Right lobe of liver (tissue), 6 donors: ENCODE measurements at regions of chr6 and their contacts with region 1.

Region 1: GRCh38 chr6:53171605-53172446 is 23.2 kb upstream of the GCM1 start:
- DNase-seq: peak; percentile 89 to 92 (median 90)
- ATAC-seq: peak; percentile 100
- H3K4me3 ChIP-seq: no peak overlapping the region
- H3K27ac ChIP-seq: no peak overlapping the region
- H3K4me1 ChIP-seq: peaks cover 0 to 10% (median 0%) of the 10 kb centered on the region in 4 donors
- H3K27me3 ChIP-seq: no peaks in the 10 kb centered on the region
- CTCF ChIP-seq: peak; percentile 100
- POLR2A ChIP-seq: no peak

Region 2: DNA sequence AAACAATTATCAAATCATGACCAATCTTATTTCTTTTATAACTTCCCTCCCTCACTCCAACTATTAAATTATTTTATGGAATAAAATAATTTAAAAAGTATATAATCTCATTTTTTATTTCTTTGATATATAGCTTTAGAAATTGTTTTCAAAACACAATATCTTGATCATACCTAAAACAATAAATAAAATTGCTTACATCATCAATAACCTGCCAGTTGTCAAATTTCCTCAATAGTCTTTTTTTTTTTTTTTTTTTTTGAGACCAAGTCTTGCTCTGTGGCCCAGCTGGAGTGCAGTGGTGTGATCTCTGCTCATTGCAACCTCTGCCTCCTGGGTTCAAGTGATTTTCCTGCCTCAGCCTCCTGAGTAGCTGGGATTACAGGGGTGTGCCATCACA is 237.0 kb after region 1 on chr6:
- intact Hi-C with region 1: loop called in 1 of 2 experiments (anchors 10 kb)
- DNase-seq: no peak
- ATAC-seq: no peak
- H3K4me3 ChIP-seq: no peak overlapping the region
- H3K27ac ChIP-seq: no peak overlapping the region
- H3K4me1 ChIP-seq: peaks cover 0 to 32% (median 11%) of the 10 kb centered on the region in 4 donors
- H3K27me3 ChIP-seq: no peaks in the 10 kb centered on the region
- CTCF ChIP-seq: no peak
- POLR2A ChIP-seq: no peak

Region 3: GRCh38 chr6:53484476-53485280 is 312.9 kb after region 1 on chr6:
- intact Hi-C with region 1: loop called in 1 of 2 experiments (anchors 5 kb)
- DNase-seq: peak in 1 of 3 donors; percentile 67
- ATAC-seq: peak; percentile 87 to 95 (median 90)
- H3K4me3 ChIP-seq: no peak overlapping the region
- H3K27ac ChIP-seq: no peak overlapping the region
- H3K4me1 ChIP-seq: peaks cover 0 to 6% (median 3%) of the 10 kb centered on the region in 4 donors
- H3K27me3 ChIP-seq: no peaks in the 10 kb centered on the region
- CTCF ChIP-seq: peak; percentile 90 to 99 (median 94)
- POLR2A ChIP-seq: no peak